ENCODE measurements at regions of chr4 and their contacts with region 1.

Region 1: DNA sequence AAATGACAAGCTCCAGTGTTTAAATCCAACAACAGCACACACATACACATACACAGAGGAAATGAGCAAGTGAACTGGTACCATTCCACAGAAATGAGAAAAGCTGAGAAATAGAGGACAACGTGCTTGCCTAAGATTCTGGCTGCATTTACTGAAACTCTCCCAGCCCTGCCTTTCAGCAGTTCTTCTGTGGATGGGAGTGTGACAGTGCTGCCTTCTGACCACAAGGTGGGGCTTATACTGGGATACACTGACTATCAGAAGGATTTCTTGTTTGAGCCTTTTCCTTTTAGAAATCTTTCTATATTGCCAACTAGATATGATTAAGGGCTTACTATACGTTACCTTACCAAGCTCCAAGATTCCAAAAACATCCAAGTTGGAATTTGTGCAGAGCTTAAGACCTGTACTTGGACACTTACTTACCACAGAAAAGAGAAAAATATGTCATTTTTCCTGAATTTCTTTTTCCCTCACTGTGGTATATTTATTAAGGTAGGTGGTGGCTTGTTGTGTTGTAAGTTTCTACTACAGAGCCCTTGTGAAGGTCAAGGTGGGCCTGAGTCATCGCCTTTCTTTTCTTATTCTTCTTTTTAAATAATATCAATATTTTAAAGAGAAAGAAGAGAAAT is 10.7 kb upstream of the CXCL8 start:
- DNase-seq: peak; percentile 59 to 75 (median 73)
- H3K4me3 ChIP-seq: no peak overlapping the region
- H3K4me3 Mint-ChIP-seq: no peak overlapping the region
- H3K27ac ChIP-seq: no peak overlapping the region
- H3K27ac Mint-ChIP-seq: peak overlapping the region in 5 of 7 donors; percentile 5 to 79 (median 46)
- H3K4me1 ChIP-seq: peaks cover 56 to 60% of the 10 kb centered on the region in 2 donors
- H3K4me1 Mint-ChIP-seq: peaks cover 72% of the 10 kb centered on the region
- H3K27me3 ChIP-seq: no peaks in the 10 kb centered on the region
- H3K27me3 Mint-ChIP-seq: peaks cover 0 to 5% (median 0%) of the 10 kb centered on the region in 3 donors
- CTCF ChIP-seq: peak; percentile 88

Region 2: DNA sequence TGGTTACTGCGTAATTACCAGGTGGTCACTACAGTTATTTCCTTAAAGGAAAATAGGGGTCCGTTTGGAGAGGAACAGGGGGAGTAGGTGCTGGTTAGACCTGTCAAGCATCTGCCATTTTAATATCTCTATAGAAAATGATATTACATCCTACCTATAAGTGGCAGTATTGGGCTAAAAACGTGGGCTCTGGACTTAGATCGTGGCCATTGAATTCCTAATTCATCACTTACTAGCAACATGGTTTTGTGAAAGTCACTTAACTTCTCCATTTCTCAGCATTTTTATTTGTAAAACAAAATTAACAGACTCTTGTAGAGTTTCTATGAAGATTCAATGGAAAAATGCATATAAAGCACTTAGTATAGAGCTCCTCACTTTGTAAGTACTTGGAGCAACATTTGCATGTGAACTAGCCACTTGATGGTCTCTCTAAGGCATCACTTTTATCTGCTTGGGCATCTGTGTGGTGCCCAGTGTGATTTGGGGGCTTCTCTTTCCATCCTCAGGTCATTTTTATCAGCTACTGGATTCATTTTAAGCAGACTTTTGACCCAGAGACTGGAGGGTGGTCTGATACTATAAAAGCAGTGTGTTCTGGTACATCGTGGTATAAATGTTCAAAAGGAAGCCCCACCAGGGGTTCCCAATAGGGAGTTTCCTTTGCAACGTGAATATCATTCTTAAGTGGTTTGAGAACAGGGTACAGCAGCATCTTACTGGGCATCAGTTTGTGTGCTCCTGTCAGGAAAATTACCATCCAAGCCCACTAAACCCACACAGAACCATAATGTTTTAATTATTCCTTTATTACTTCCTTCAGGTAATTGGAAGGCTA is 66.7 kb before region 1 on chr4:
- intact Hi-C with region 1: loop called in 1 of 2 experiments (anchors 10 kb)
- DNase-seq: peak; percentile 48 to 76 (median 65)
- H3K4me3 ChIP-seq: no peak overlapping the region
- H3K4me3 Mint-ChIP-seq: no peak overlapping the region
- H3K27ac ChIP-seq: no peak overlapping the region
- H3K27ac Mint-ChIP-seq: peak overlapping the region in 1 of 7 donors; percentile 31
- H3K4me1 ChIP-seq: no peaks in the 10 kb centered on the region
- H3K4me1 Mint-ChIP-seq: peaks cover 5% of the 10 kb centered on the region
- H3K27me3 ChIP-seq: no peaks in the 10 kb centered on the region
- H3K27me3 Mint-ChIP-seq: no peaks in the 10 kb centered on the region
- CTCF ChIP-seq: peak; percentile 75

Region 3: DNA sequence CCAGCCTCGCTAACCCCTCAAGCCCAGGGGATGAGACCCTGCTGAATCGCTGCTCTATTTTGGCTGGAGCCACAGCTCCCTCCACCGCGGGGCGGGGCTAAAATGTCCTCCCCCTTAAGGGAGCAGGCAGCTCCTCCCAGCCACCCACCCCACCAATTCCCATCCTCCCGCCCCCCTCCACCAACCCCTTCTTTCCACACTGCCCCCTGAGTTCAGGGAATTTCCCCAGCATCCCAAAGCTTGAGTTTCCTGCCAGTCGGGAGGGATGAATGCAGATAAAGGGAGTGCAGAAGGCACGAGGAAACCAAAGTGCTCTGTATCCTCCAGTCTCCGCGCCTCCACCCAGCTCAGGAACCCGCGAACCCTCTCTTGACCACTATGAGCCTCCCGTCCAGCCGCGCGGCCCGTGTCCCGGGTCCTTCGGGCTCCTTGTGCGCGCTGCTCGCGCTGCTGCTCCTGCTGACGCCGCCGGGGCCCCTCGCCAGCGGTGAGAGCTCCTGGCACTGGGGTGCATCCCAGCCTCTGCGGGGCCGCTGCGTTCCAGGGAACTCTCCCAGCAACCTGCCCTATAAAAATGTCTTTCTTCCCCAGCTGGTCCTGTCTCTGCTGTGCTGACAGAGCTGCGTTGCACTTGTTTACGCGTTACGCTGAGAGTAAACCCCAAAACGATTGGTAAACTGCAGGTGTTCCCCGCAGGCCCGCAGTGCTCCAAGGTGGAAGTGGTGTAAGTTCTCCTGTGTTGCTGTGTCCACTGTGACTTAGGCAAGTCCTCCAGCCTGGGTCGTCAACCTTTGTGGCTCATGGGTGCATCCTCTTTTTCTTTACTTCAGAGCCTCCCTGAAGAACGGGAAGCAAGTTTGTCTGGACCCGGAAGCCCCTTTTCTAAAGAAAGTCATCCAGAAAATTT is 107.0 kb after region 1 on chr4 and contains the start of gene CXCL6:
- intact Hi-C with region 1: loop called (anchors 5 to 10 kb)
- DNase-seq: peak; percentile 42 to 69 (median 63)
- H3K4me3 ChIP-seq: peak within 1 kb of the TSS; percentile 37 to 77 (median 41)
- H3K4me3 Mint-ChIP-seq: peak within 1 kb of the TSS; percentile 84 to 96
- H3K27ac ChIP-seq: peak within 1 kb of the TSS in 1 of 2 donors; percentile 27
- H3K27ac Mint-ChIP-seq: peak within 1 kb of the TSS; percentile 37 to 87 (median 73)
- H3K4me1 ChIP-seq: peaks cover 12 to 14% of the 10 kb centered on the region in 2 donors
- H3K4me1 Mint-ChIP-seq: peaks cover 18% of the 10 kb centered on the region
- H3K27me3 ChIP-seq: no peaks in the 10 kb centered on the region
- H3K27me3 Mint-ChIP-seq: peaks cover 1 to 7% (median 3%) of the 10 kb centered on the region in 3 donors
- CTCF ChIP-seq: no peak
- polyA plus RNA-seq, gene CXCL6: not detected

Region 4: GRCh38 chr4:73844352-73844751 is 114.7 kb after region 1 on chr4:
- intact Hi-C with region 1: loop called (anchors 5 to 10 kb)
- DNase-seq: peak; percentile 70 to 88 (median 81)
- H3K4me3 ChIP-seq: peak overlapping the region in 1 of 3 experiments; percentile 37
- H3K4me3 Mint-ChIP-seq: peak overlapping the region; percentile 10 to 66
- H3K27ac ChIP-seq: peak overlapping the region in 1 of 2 donors; percentile 64
- H3K27ac Mint-ChIP-seq: peak overlapping the region; percentile 79 to 93 (median 87)
- H3K4me1 ChIP-seq: peaks cover 18 to 26% of the 10 kb centered on the region in 2 donors
- H3K4me1 Mint-ChIP-seq: peaks cover 28% of the 10 kb centered on the region
- H3K27me3 ChIP-seq: no peaks in the 10 kb centered on the region
- H3K27me3 Mint-ChIP-seq: no peaks in the 10 kb centered on the region
- CTCF ChIP-seq: no peak

Region 5: DNA sequence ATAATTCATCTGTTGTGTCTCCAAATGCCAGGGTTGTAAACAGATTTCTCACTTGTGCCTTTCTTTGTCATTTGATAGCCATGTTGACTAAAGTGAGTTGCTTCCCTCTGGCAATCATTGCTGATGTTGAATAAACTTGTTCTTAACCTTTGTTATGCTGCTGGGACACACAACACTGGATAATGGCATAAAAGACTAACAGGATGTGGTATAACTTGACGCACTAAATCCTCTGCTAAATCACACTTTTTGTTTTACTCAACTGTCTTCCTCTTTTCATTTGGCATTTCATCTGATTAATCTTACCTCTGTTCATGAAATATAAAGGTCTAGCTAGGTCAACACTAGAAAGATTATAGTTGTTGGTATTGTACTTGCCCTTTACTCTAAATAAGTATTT is 286.4 kb after region 1 on chr4:
- intact Hi-C with region 1: loop called in 1 of 2 experiments (anchors 10 kb)
- DNase-seq: peak; percentile 33 to 50 (median 49)
- H3K4me3 ChIP-seq: no peak overlapping the region
- H3K4me3 Mint-ChIP-seq: no peak overlapping the region
- H3K27ac ChIP-seq: no peak overlapping the region
- H3K27ac Mint-ChIP-seq: peak overlapping the region in 3 of 7 donors; percentile 1 to 86 (median 61)
- H3K4me1 ChIP-seq: peaks cover 6 to 12% of the 10 kb centered on the region in 2 donors
- H3K4me1 Mint-ChIP-seq: peaks cover 20% of the 10 kb centered on the region
- H3K27me3 ChIP-seq: no peaks in the 10 kb centered on the region
- H3K27me3 Mint-ChIP-seq: peaks cover 0 to 4% (median 2%) of the 10 kb centered on the region in 3 donors
- CTCF ChIP-seq: no peak

Region 6: DNA sequence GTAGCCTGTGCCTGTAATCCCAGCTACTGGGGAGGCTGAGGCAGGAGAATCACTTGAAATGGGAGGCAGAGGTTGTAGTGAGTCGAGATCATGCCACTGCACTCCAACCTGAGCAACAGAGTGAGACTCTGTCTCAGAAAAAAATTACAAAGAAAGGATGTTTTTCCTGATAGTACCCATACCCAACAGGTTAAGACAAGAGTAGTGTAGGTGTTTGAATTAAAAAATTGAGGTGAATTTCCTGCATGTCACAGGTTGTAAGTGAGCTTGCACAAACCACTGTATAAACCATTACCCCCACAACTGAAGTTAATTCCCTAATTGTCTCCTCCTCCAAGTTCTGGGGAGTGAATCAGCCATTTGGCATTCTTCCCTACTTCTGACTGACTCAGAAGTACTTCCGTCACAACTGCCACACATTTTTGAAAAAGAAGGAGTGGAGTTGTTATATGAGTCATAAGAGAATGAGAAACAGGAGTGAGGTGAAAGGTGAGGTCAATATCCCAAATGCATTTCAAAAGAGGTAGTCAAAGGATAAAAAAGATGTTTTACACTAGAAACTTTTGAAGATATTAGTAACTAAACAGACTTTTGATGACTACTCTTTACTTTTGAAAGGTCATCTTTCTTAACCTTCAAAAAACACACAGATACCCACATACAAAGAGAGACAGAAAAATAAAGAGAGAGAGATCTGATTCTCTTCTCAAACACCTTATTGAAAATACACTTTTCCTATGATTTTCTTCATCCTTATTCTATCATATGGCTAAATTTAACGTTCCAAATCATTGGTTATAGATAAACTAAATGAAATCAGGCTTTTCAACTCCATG is 930.1 kb after region 1 on chr4:
- intact Hi-C with region 1: loop called in 1 of 2 experiments (anchors 5 kb)
- DNase-seq: peak; percentile 82 to 95 (median 93)
- H3K4me3 ChIP-seq: no peak overlapping the region
- H3K4me3 Mint-ChIP-seq: no peak overlapping the region
- H3K27ac ChIP-seq: no peak overlapping the region
- H3K27ac Mint-ChIP-seq: peak overlapping the region; percentile 33 to 88 (median 78)
- H3K4me1 ChIP-seq: peaks cover 7 to 18% of the 10 kb centered on the region in 2 donors
- H3K4me1 Mint-ChIP-seq: peaks cover 19% of the 10 kb centered on the region
- H3K27me3 ChIP-seq: no peaks in the 10 kb centered on the region
- H3K27me3 Mint-ChIP-seq: peaks cover 0 to 3% (median 0%) of the 10 kb centered on the region in 3 donors
- CTCF ChIP-seq: no peak

Measured in CD14-positive monocyte (primary cell).